Right ventricle myocardium superior (tissue), 1 donor: ENCODE measurements at regions of chr12 and their contacts with region 1.

Region 1: DNA sequence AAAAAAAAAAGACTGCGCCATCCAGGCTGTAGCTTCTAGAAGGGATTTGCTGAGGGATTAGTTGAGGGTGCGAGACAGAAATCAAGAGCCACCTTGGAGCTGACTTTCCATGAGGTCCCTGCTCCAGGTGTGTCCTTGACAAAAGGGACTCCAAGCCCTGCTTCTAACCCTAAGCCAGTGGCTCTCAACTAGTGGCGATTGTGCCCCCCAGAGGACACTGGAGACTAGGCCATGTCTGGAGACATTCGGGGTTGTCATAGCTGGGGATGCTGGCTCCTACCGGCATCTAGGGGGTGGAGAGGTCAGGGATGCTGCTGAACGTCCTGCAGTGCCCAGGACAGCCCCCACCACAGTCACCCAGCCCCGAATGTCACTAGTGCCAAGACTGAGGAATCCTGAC is 40.6 kb downstream of the SPRING1 start:
- DNase-seq: no peak
- ATAC-seq: no peak

Region 2: DNA sequence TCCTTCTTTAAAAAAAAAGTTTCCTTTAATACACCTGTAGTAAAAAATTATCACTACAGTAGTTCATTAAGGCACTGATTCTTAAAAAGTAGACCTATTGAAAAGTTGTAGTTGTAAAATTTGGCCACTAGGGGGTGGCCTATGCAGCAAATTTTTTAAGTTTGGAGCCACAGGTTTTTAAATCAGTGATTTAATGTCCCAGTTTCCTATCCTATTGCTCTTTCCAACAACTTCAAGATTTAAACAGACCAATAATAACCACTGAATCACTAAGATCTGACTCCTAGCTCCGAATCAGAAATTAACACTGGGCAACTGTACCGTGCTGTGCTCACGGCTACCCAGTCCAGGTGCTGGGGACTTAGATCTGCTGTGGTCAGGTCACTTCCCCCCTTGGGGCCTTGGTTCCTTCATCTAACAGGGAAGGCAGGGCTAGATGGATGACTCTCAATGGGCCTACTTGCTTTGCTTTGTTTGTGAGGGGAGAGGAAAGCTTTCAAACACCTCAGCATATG is 699.1 kb before region 1 on chr12:
- intact Hi-C with region 1: loop called (anchors 10 kb)
- DNase-seq: no peak
- ATAC-seq: peak; percentile 53

Region 3: DNA sequence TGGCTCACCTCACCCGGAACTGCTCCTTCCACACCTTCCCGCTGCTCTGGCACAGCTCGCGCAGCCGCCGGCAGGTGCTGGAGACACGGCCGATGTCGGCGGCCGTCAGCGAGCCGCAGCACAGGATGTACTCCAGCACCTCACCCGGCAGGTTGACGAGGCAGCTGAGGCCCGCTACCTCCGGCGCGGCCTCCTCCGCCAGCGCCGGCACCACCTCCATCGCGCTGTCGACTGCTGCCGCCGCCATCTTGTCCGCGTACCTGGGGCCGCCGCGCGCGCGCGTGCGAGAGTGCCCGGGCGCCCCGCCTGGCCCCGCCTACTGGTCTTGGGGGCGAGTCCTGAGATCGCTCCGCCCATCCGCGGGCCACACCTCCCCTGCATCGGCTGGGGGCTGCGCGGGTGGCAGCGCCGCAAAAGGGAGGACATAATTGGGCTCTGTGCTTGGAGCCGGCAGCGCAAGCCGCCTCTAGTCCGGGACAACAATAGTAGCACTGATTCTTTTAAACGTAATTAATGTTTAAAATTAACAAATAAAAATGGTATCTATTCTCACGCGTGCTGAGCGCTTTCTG is 493.0 kb after region 1 on chr12 and contains the start of gene FBXO21:
- intact Hi-C with region 1: no loop called
- DNase-seq: peak; percentile 95
- ATAC-seq: peak; percentile 99
- total RNA-seq, gene FBXO21: 35.3 TPM